Mammary epithelial cell (primary cell): ENCODE measurements at regions of chr5 and their contacts with region 1.

Region 1: GRCh38 chr5:159331093-159331973 is 1.0 kb upstream of the IL12B start:
- DNase-seq: no peak
- H3K4me3 ChIP-seq: peak overlapping the region; percentile 37 to 56 (median 45)
- H3K27ac ChIP-seq: no peak overlapping the region
- H3K4me1 ChIP-seq: peaks cover 9% of the 10 kb centered on the region
- H3K27me3 ChIP-seq: no peaks in the 10 kb centered on the region
- CTCF ChIP-seq: peak; percentile 56 to 83

Region 2: DNA sequence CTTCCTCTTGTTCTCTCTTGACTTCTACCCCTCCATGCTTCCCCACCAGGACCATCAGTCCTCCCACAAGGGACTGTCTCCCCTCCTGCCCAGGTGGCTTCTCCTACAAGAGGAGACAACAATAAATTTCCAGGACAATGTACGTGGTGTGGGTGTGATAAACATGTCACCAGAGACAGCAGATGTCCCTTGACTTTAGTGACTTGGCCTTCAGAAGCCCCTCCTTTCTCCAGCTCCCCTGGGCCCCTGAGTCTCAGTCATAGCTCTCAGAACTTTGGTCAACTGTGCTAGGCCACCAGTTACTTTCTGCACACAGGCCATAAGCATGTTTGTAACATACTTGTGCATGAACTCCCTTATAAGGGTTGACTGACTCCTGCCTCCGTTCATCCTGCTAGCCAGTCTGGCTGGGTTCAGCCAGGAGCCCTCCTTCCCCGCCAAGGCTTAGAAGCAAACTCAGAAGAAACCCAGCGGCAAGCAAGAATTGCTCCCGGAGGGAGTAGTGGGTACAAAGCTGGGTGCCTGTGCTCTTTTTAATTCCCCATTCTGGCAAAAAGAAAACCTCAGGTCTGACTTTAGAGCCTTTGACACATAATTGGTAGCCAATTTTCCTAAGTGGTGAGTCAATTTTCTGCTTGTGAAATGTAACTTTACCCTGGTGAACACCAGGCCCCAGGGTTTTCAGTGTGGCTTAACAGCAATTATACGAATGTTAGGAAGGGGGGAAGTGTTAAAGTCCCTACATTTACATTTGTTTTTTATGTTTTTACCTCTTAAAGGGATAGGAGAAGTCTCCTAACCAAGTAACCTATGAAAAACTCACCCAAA is 280.8 kb before region 1 on chr5:
- CTCF ChIA-PET with region 1: no interaction called
- dilution Hi-C with region 1: no loop called
- in situ Hi-C with region 1: no loop called
- intact Hi-C with region 1: no loop called
- DNase-seq: no peak
- H3K4me3 ChIP-seq: no peak overlapping the region
- H3K27ac ChIP-seq: no peak overlapping the region
- H3K4me1 ChIP-seq: peaks cover 3% of the 10 kb centered on the region
- H3K27me3 ChIP-seq: peaks cover 24% of the 10 kb centered on the region
- CTCF ChIP-seq: no peak

Region 3: GRCh38 chr5:159682623-159683022 is 351.3 kb after region 1 on chr5:
- CTCF ChIA-PET with region 1: no interaction called
- dilution Hi-C with region 1: no loop called
- in situ Hi-C with region 1: no loop called
- intact Hi-C with region 1: loop called (anchors 10 kb)
- DNase-seq: no peak
- H3K4me3 ChIP-seq: no peak overlapping the region
- H3K27ac ChIP-seq: no peak overlapping the region
- H3K4me1 ChIP-seq: no peaks in the 10 kb centered on the region
- H3K27me3 ChIP-seq: no peaks in the 10 kb centered on the region
- CTCF ChIP-seq: no peak